SK-N-SH (cell line): ENCODE measurements at regions of chr7 and their contacts with region 1.

Region 1: DNA sequence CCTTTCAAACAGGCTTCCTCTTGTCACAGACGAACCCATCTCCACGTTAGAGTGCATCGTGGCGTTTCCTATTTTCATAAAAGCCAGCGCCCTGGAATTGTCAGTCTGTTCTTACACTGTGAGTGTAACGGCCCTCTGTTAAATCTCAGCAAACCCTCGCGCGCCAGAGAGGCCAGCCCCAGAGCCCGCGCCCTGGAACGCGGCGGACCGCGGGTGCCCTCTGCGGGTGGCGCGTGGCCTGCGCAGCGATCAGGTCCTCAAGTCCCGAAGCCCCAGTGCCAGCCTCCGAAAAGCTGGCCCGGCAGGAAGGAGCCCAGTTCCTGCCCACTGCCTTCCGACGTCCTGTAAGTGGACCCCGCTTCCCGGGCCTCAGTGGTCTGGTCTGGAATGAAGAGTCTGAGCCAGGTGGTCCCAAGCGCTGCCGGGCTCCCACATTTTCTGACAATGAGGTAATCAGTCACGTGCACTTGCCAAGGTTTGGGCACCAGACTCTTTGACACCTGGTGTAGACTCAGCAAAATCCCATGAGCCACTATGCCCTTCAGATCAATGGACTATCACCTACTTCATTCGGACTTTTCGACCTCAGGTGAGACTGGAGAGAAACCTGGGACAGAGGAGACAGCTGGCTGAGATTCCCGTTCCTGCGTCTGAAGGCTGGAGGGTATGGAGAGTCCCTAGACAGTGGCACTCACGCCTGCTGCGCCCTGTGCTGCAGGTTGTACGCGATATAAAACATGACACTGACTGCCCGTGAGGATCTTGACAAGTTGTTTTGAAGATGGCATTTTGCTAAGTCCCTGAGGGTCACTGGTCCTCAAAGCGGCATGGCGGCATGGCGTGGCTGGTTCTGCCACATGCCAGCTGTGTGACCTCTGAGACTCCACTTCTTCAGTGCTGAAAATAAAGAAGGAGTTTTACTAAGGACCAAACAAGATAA is 109.4 kb upstream of the LANCL2 start:
- DNase-seq: peak; percentile 93
- H3K4me3 ChIP-seq: peak overlapping the region; percentile 56 to 67
- H3K27ac ChIP-seq: peak overlapping the region; percentile 50 to 58; a peak in 3 of 4 replicates
- H3K4me1 ChIP-seq: peaks cover 0 to 15% of the 10 kb centered on the region in 2 experiments; a peak in 1 of 4 replicates
- H3K27me3 ChIP-seq: no peaks in the 10 kb centered on the region
- CTCF ChIP-seq: peak; percentile 99
- EP300 ChIP-seq: no peak
- RAD21 ChIP-seq: peak; percentile 99

Region 2: GRCh38 chr7:54864663-54865062 is 391.1 kb before region 1 on chr7:
- CTCF ChIA-PET with region 1: interaction called, 23 read pairs
- POLR2A ChIA-PET with region 1: no interaction called
- DNase-seq: no peak
- H3K4me3 ChIP-seq: no peak overlapping the region
- H3K27ac ChIP-seq: no peak overlapping the region
- H3K4me1 ChIP-seq: peaks cover 0 to 12% of the 10 kb centered on the region in 2 experiments; a peak in 2 of 4 replicates
- H3K27me3 ChIP-seq: no peaks in the 10 kb centered on the region
- CTCF ChIP-seq: no peak
- EP300 ChIP-seq: no peak
- RAD21 ChIP-seq: no peak

Region 3: GRCh38 chr7:54967384-54967783 is 288.4 kb before region 1 on chr7:
- CTCF ChIA-PET with region 1: interaction called, 12 read pairs
- POLR2A ChIA-PET with region 1: no interaction called
- DNase-seq: no peak
- H3K4me3 ChIP-seq: no peak overlapping the region
- H3K27ac ChIP-seq: no peak overlapping the region
- H3K4me1 ChIP-seq: peaks cover 0 to 3% of the 10 kb centered on the region in 2 experiments; a peak in 2 of 4 replicates
- H3K27me3 ChIP-seq: no peaks in the 10 kb centered on the region
- CTCF ChIP-seq: no peak
- EP300 ChIP-seq: no peak
- RAD21 ChIP-seq: no peak

Region 4: DNA sequence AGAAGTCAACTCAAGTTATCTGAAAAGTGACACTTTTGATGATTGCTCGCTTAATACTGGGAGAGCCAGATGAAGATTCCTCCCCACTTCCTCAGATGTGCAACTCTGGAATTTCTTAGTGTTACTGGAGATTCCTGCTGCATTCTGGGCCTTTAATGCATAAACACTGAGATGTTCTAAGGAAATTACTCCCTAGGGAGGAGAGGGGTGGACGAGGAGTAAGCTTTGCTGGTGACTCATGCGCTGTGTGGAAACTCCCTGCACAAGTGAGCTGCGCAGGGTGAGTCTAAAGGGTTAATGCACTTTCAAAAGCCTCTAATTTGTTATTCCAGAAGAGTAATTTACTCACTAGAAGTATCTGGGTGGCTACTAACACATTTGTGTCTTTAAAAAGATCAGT is 190.7 kb before region 1 on chr7:
- CTCF ChIA-PET with region 1: interaction called, 21 read pairs
- POLR2A ChIA-PET with region 1: no interaction called
- DNase-seq: no peak
- H3K4me3 ChIP-seq: 0 out of 4 replicates have a peak overlapping the region, but pooled peaks of 1 of the 2 experiments have one; percentile 0
- H3K27ac ChIP-seq: peak overlapping the region; percentile 82 to 97
- H3K4me1 ChIP-seq: peaks cover 20 to 65% of the 10 kb centered on the region in 2 experiments
- H3K27me3 ChIP-seq: no peaks in the 10 kb centered on the region
- CTCF ChIP-seq: no peak
- EP300 ChIP-seq: peak in 1 of 2 experiments; percentile 65; a peak in 2 of 4 replicates
- RAD21 ChIP-seq: no peak

Region 5: DNA sequence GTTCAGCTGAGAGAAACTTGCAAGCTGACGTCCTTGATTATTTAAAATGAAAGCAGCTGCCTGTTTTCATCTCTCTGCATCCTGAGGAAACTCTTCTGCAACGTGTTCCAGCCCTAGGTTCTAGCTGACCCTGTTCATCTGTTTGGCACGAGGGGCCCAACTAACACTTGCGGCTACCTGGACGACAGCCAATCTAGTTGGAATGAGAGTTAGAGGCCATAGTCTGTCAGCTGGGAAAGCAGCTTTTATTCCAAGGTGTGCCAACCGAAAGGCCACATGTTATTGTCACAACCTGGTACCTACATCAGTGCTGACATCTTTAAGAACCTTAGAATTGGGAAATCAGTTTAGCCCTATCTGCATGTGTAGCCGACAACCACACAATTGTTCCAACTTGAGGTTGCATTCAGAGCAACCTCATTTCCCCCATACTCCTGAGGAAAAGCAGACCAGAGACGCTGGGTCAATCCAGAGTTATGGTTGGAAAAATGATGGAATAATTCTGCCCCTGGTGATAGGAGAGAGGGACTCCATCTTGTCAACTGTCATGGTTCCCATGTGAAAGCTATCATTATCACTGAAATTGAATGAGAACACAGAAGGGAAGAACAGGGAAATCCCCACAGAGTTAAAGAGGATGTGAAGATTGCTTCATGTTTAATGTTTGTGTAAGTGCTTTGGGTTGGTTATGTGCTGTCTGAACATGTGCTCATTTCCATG is 115.4 kb before region 1 on chr7:
- CTCF ChIA-PET with region 1: interaction called, 211 read pairs
- POLR2A ChIA-PET with region 1: no interaction called
- DNase-seq: no peak
- H3K4me3 ChIP-seq: no peak overlapping the region
- H3K27ac ChIP-seq: 0 out of 4 replicates have a peak overlapping the region, but pooled peaks of 1 of the 2 experiments have one; percentile 16
- H3K4me1 ChIP-seq: peaks cover 0 to 7% of the 10 kb centered on the region in 2 experiments; a peak in 1 of 4 replicates
- H3K27me3 ChIP-seq: no peaks in the 10 kb centered on the region
- CTCF ChIP-seq: no peak
- EP300 ChIP-seq: no peak
- RAD21 ChIP-seq: no peak

Region 6: GRCh38 chr7:55223023-55223422 is 32.7 kb before region 1 on chr7:
- CTCF ChIA-PET with region 1: interaction called, 20 read pairs
- POLR2A ChIA-PET with region 1: no interaction called
- DNase-seq: no peak
- H3K4me3 ChIP-seq: no peak overlapping the region
- H3K27ac ChIP-seq: no peak overlapping the region
- H3K4me1 ChIP-seq: no peaks in the 10 kb centered on the region; a peak in 1 of 4 replicates
- H3K27me3 ChIP-seq: no peaks in the 10 kb centered on the region
- CTCF ChIP-seq: no peak
- EP300 ChIP-seq: no peak
- RAD21 ChIP-seq: no peak